ENCODE measurements at regions of chr1 and their contacts with region 1.

Region 1: GRCh38 chr1:103461161-103462105 is 64.1 kb upstream of the RNPC3 start:
- DNase-seq: peak; percentile 31
- H3K4me3 ChIP-seq: no peak overlapping the region
- H3K27ac ChIP-seq: no peak overlapping the region
- H3K4me1 ChIP-seq: no peaks in the 10 kb centered on the region
- H3K27me3 ChIP-seq: no peaks in the 10 kb centered on the region
- CTCF ChIP-seq: peak; percentile 73

Region 2: GRCh38 chr1:102977293-102977692 is 484.1 kb before region 1 on chr1:
- CTCF ChIA-PET with region 1: no interaction called
- POLR2A ChIA-PET with region 1: no interaction called
- intact Hi-C with region 1: loop called (anchors 10 kb)
- DNase-seq: no peak
- H3K4me3 ChIP-seq: no peak overlapping the region
- H3K27ac ChIP-seq: no peak overlapping the region
- H3K4me1 ChIP-seq: no peaks in the 10 kb centered on the region
- H3K27me3 ChIP-seq: no peaks in the 10 kb centered on the region
- CTCF ChIP-seq: no peak

Region 3: DNA sequence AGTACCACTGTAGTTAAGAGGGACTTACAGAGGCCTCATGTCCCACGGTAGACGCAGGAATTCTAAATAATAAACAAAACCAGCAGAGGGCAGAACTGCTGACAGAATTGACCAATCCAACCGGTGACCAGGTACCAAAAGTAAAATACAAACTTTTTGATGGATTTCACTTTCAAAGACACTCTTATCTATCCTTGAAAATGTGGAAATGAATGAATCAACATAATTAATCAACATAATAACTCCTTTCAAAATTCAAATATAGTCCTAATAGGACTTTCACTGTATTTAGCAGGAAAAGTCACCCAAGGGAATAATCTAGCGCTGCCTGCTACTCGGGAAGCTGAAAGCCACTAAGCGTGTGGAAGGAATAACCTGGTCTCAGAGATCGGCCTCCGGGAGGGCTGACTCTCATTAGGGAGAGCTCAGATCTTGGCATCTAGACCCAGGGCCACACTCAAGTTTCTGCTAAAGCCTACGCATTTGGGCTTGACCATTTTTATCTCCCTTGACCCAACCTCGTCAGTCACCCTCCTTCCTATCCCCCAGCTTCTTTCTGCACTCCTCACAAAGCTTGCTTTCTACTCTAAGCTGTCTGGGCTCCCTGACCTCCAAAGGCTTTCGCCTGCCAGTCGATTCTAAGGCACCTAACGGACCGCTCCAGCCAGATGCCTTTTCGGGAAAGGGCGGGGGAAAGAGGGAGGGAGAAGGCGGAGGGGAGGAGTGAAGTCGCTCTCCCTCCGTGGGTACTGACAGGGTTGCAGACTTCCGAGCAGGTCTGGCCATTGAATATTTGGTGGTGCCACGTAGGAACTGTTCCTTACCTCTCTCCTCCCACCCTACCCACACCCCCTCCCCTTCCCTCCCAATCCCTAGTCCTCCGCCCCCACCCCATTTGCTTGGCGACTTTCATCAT is 354.7 kb before region 1 on chr1:
- CTCF ChIA-PET with region 1: interaction called, 25 read pairs
- POLR2A ChIA-PET with region 1: no interaction called
- intact Hi-C with region 1: loop called (anchors 1 kb)
- DNase-seq: peak; percentile 72
- H3K4me3 ChIP-seq: peak overlapping the region; percentile 55
- H3K27ac ChIP-seq: no peak overlapping the region
- H3K4me1 ChIP-seq: no peaks in the 10 kb centered on the region
- H3K27me3 ChIP-seq: no peaks in the 10 kb centered on the region
- CTCF ChIP-seq: peak; percentile 80

Region 4: GRCh38 chr1:103538226-103538625 is 76.8 kb after region 1 on chr1:
- CTCF ChIA-PET with region 1: no interaction called
- POLR2A ChIA-PET with region 1: no interaction called
- intact Hi-C with region 1: no loop called
- DNase-seq: no peak
- H3K4me3 ChIP-seq: no peak overlapping the region
- H3K27ac ChIP-seq: no peak overlapping the region
- H3K4me1 ChIP-seq: no peaks in the 10 kb centered on the region
- H3K27me3 ChIP-seq: no peaks in the 10 kb centered on the region
- CTCF ChIP-seq: no peak